ENCODE measurements at regions of chr19 and their contacts with region 1.

Region 1: GRCh38 chr19:34220472-34221063 is 33.8 kb upstream of the GARRE1 start:
- DNase-seq: peak; percentile 21 to 58 (median 47)
- ATAC-seq: no peak
- H3K4me3 ChIP-seq: no peak overlapping the region
- H3K4me3 Mint-ChIP-seq: peak overlapping the region in 4 of 10 donors; percentile 3 to 29 (median 10)
- H3K27ac ChIP-seq: no peak overlapping the region
- H3K27ac Mint-ChIP-seq: peak overlapping the region in 8 of 9 donors; percentile 31 to 89 (median 76)
- H3K4me1 ChIP-seq: peaks cover 19 to 24% of the 10 kb centered on the region in 2 donors
- H3K4me1 Mint-ChIP-seq: peaks cover 23 to 79% (median 58%) of the 10 kb centered on the region in 7 donors
- H3K27me3 ChIP-seq: no peaks in the 10 kb centered on the region
- H3K27me3 Mint-ChIP-seq: no peaks in the 10 kb centered on the region

Region 2: GRCh38 chr19:33630880-33631608 is 589.5 kb before region 1 on chr19:
- CTCF ChIA-PET with region 1: no interaction called
- POLR2A ChIA-PET with region 1: no interaction called
- intact Hi-C with region 1: no loop called
- DNase-seq: no peak
- ATAC-seq: no peak
- H3K4me3 ChIP-seq: no peak overlapping the region
- H3K4me3 Mint-ChIP-seq: no peak overlapping the region
- H3K27ac ChIP-seq: no peak overlapping the region
- H3K27ac Mint-ChIP-seq: no peak overlapping the region
- H3K4me1 ChIP-seq: no peaks in the 10 kb centered on the region
- H3K4me1 Mint-ChIP-seq: no peaks in the 10 kb centered on the region
- H3K27me3 ChIP-seq: no peaks in the 10 kb centered on the region
- H3K27me3 Mint-ChIP-seq: peaks cover 0 to 42% (median 17%) of the 10 kb centered on the region in 5 donors

Region 3: GRCh38 chr19:34120846-34121639 is 99.5 kb before region 1 on chr19:
- CTCF ChIA-PET with region 1: no interaction called
- POLR2A ChIA-PET with region 1: interaction called, 4 read pairs
- intact Hi-C with region 1: loop called in 1 of 2 experiments (anchors 1 kb)
- DNase-seq: peak in 8 of 9 donors; percentile 38 to 57 (median 50)
- ATAC-seq: peak; percentile 76
- H3K4me3 ChIP-seq: no peak overlapping the region
- H3K4me3 Mint-ChIP-seq: no peak overlapping the region
- H3K27ac ChIP-seq: no peak overlapping the region
- H3K27ac Mint-ChIP-seq: peak overlapping the region in 3 of 9 donors; percentile 8 to 39 (median 9)
- H3K4me1 ChIP-seq: peaks cover 0 to 11% of the 10 kb centered on the region in 2 donors
- H3K4me1 Mint-ChIP-seq: peaks cover 2 to 33% (median 26%) of the 10 kb centered on the region in 7 donors
- H3K27me3 ChIP-seq: no peaks in the 10 kb centered on the region
- H3K27me3 Mint-ChIP-seq: peaks cover 0 to 13% (median 0%) of the 10 kb centered on the region in 5 donors

Region 4: GRCh38 chr19:34253699-34254551 is 33.4 kb after region 1 on chr19:
- CTCF ChIA-PET with region 1: no interaction called
- POLR2A ChIA-PET with region 1: no interaction called
- intact Hi-C with region 1: loop called in 1 of 2 experiments (anchors 1 kb)
- DNase-seq: peak in 7 of 9 donors; percentile 75 to 88 (median 86)
- ATAC-seq: peak; percentile 51
- H3K4me3 ChIP-seq: peak overlapping the region; percentile 72
- H3K4me3 Mint-ChIP-seq: peak overlapping the region; percentile 86 to 100 (median 96)
- H3K27ac ChIP-seq: peak overlapping the region; percentile 97
- H3K27ac Mint-ChIP-seq: peak overlapping the region; percentile 94 to 100 (median 97)
- H3K4me1 ChIP-seq: peaks cover 6 to 27% of the 10 kb centered on the region in 2 donors
- H3K4me1 Mint-ChIP-seq: peaks cover 12 to 48% (median 36%) of the 10 kb centered on the region in 7 donors
- H3K27me3 ChIP-seq: no peaks in the 10 kb centered on the region
- H3K27me3 Mint-ChIP-seq: no peaks in the 10 kb centered on the region

Region 5: GRCh38 chr19:34336781-34337271 is 116.3 kb after region 1 on chr19:
- CTCF ChIA-PET with region 1: interaction called, 4 read pairs
- POLR2A ChIA-PET with region 1: interaction called, 3 read pairs
- intact Hi-C with region 1: loop called in 1 of 2 experiments (anchors 1 kb)
- DNase-seq: peak in 7 of 9 donors; percentile 34 to 65 (median 60)
- ATAC-seq: peak; percentile 72
- H3K4me3 ChIP-seq: no peak overlapping the region
- H3K4me3 Mint-ChIP-seq: no peak overlapping the region
- H3K27ac ChIP-seq: no peak overlapping the region
- H3K27ac Mint-ChIP-seq: peak overlapping the region in 8 of 9 donors; percentile 25 to 86 (median 55)
- H3K4me1 ChIP-seq: peaks cover 0 to 10% of the 10 kb centered on the region in 2 donors
- H3K4me1 Mint-ChIP-seq: peaks cover 3 to 16% (median 9%) of the 10 kb centered on the region in 7 donors
- H3K27me3 ChIP-seq: no peaks in the 10 kb centered on the region
- H3K27me3 Mint-ChIP-seq: no peaks in the 10 kb centered on the region

Region 6: DNA sequence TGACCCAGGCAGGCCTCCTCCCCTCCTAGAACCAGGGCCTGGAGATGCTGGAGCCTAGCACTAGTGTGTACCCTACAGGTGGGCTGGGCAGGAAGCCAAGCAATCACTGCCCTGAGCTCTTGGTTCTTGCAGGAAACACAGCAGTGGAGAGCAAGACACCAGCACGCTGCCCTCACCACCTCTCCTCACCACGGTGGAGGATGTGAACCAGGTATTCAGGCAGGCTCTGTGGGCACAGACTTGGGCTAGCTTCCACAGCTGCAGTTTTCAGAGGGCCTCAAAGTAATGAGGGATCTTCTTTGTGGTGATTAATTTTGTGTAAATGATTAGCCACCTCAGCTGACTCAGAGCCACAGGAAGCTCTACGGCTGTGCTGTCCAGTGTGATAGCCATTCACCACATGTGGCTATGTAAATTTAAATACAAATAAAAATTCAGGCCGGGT is 130.8 kb after region 1 on chr19:
- CTCF ChIA-PET with region 1: interaction called, 3 read pairs
- POLR2A ChIA-PET with region 1: no interaction called
- intact Hi-C with region 1: loop called in 1 of 2 experiments (anchors 1 kb)
- DNase-seq: peak in 1 of 9 donors; percentile 16
- ATAC-seq: no peak
- H3K4me3 ChIP-seq: no peak overlapping the region
- H3K4me3 Mint-ChIP-seq: peak overlapping the region in 7 of 10 donors; percentile 12 to 75 (median 45)
- H3K27ac ChIP-seq: peak overlapping the region; percentile 43
- H3K27ac Mint-ChIP-seq: peak overlapping the region in 8 of 9 donors; percentile 76 to 91 (median 86)
- H3K4me1 ChIP-seq: peaks cover 18 to 25% of the 10 kb centered on the region in 2 donors
- H3K4me1 Mint-ChIP-seq: peaks cover 13 to 41% (median 26%) of the 10 kb centered on the region in 7 donors
- H3K27me3 ChIP-seq: no peaks in the 10 kb centered on the region
- H3K27me3 Mint-ChIP-seq: no peaks in the 10 kb centered on the region